CD4-positive, alpha-beta memory T cell (primary cell): ENCODE measurements at regions of chr17 and their contacts with region 1.

Region 1: DNA sequence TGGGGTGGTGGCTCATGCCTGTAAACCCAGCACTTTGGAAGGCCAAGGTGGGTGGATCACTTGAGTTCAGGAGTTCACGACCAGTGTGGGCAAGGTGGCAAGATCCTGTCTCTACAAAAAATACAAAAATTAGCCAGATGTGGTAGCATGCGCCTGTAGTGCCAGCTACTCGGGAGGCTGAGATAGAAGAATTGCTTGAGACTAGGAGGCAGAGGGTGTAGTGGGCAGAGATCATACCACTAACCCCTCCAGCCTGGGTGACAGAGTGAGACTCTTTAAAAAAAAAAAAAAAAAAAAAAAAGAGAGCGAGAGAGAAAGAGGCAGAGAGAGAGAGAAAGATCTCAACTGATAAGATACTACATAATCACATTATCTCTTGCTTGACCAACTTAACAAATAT is 45.9 kb downstream of the KANSL1 start:
- DNase-seq: peak in 1 of 5 donors; percentile 20
- H3K4me3 ChIP-seq: no peak overlapping the region
- H3K4me3 Mint-ChIP-seq: peak overlapping the region in 7 of 8 donors; percentile 40 to 73 (median 50)
- H3K27ac ChIP-seq: no peak overlapping the region
- H3K27ac Mint-ChIP-seq: peak overlapping the region in 5 of 7 donors; percentile 49 to 88 (median 81)
- H3K4me1 ChIP-seq: peaks cover 93% of the 10 kb centered on the region
- H3K4me1 Mint-ChIP-seq: peaks cover 61 to 96% (median 88%) of the 10 kb centered on the region in 4 donors
- H3K27me3 ChIP-seq: no peaks in the 10 kb centered on the region
- H3K27me3 Mint-ChIP-seq: no peaks in the 10 kb centered on the region

Region 2: GRCh38 chr17:46097497-46097896 is 49.8 kb before region 1 on chr17:
- CTCF ChIA-PET with region 1: no interaction called
- POLR2A ChIA-PET with region 1: no interaction called
- intact Hi-C with region 1: no loop called
- DNase-seq: no peak
- H3K4me3 ChIP-seq: no peak overlapping the region
- H3K4me3 Mint-ChIP-seq: peak overlapping the region in 1 of 8 donors; percentile 13
- H3K27ac ChIP-seq: no peak overlapping the region
- H3K27ac Mint-ChIP-seq: peak overlapping the region in 5 of 7 donors; percentile 1 to 74 (median 9)
- H3K4me1 ChIP-seq: peaks cover 54% of the 10 kb centered on the region
- H3K4me1 Mint-ChIP-seq: peaks cover 39 to 81% (median 58%) of the 10 kb centered on the region in 4 donors
- H3K27me3 ChIP-seq: no peaks in the 10 kb centered on the region
- H3K27me3 Mint-ChIP-seq: no peaks in the 10 kb centered on the region

Region 3: DNA sequence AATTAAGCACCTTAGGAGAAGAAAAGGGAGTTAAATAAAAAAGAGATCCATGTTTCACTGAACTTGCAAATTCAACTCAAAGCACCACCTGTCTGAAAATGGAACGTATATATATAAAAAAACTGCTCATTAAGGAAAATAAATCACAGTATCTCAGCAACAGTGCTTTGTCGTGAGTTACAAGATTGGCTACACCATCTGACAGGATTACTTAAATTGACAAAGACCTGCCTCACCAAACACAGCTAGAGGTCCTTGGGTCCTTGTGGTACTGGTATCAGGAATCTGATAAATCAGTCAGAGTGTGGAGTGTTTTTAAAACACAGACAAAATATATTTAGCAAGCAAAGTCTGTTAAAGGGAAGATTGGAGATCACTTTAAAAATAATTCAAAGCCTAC is 18.0 kb before region 1 on chr17:
- CTCF ChIA-PET with region 1: no interaction called
- POLR2A ChIA-PET with region 1: no interaction called
- intact Hi-C with region 1: loop called (anchors 1 kb)
- DNase-seq: no peak
- H3K4me3 ChIP-seq: no peak overlapping the region
- H3K4me3 Mint-ChIP-seq: peak overlapping the region in 4 of 8 donors; percentile 7 to 61 (median 39)
- H3K27ac ChIP-seq: no peak overlapping the region
- H3K27ac Mint-ChIP-seq: peak overlapping the region in 4 of 7 donors; percentile 25 to 85 (median 58)
- H3K4me1 ChIP-seq: peaks cover 93% of the 10 kb centered on the region
- H3K4me1 Mint-ChIP-seq: peaks cover 76 to 94% (median 87%) of the 10 kb centered on the region in 4 donors
- H3K27me3 ChIP-seq: no peaks in the 10 kb centered on the region
- H3K27me3 Mint-ChIP-seq: no peaks in the 10 kb centered on the region